Activated CD4-positive, alpha-beta memory T cell treated with anti-CD3 and anti-CD28 coated beads for 36 hours (primary cell): ENCODE measurements at regions of chr5 and their contacts with region 1.

Region 1: GRCh38 chr5:132883261-132883834 is 9.9 kb downstream of the LEAP2 start:
- DNase-seq: peak; percentile 38
- H3K4me3 Mint-ChIP-seq: no peak overlapping the region
- H3K27ac Mint-ChIP-seq: no peak overlapping the region
- H3K4me1 Mint-ChIP-seq: peaks cover 3% of the 10 kb centered on the region
- H3K27me3 Mint-ChIP-seq: no peaks in the 10 kb centered on the region

Region 2: DNA sequence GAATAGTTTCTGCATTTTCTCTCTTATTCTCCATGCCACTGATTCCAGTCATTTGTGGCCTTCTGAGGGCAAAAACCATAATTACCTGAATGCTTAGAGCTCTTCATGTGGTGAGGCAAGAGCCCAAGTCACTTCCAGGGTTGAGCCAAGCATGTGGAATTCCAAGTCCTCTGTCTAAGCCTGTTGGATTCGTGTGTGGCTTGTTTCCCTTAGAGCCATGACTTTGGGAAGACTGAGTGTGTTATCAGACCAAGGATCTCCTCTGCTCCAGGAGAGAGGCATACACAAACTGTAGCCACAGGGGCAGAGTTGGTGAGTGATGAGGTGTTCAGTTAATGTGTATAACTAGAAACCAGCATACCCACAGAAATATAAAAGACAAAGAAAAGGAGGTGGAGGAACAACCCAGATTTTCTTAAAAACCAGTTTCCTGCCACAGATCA is 486.7 kb before region 1 on chr5:
- CTCF ChIA-PET with region 1: no interaction called
- POLR2A ChIA-PET with region 1: no interaction called
- intact Hi-C with region 1: no loop called
- DNase-seq: no peak
- H3K4me3 Mint-ChIP-seq: no peak overlapping the region
- H3K27ac Mint-ChIP-seq: peak overlapping the region; percentile 44
- H3K4me1 Mint-ChIP-seq: peaks cover 80% of the 10 kb centered on the region
- H3K27me3 Mint-ChIP-seq: no peaks in the 10 kb centered on the region

Region 3: DNA sequence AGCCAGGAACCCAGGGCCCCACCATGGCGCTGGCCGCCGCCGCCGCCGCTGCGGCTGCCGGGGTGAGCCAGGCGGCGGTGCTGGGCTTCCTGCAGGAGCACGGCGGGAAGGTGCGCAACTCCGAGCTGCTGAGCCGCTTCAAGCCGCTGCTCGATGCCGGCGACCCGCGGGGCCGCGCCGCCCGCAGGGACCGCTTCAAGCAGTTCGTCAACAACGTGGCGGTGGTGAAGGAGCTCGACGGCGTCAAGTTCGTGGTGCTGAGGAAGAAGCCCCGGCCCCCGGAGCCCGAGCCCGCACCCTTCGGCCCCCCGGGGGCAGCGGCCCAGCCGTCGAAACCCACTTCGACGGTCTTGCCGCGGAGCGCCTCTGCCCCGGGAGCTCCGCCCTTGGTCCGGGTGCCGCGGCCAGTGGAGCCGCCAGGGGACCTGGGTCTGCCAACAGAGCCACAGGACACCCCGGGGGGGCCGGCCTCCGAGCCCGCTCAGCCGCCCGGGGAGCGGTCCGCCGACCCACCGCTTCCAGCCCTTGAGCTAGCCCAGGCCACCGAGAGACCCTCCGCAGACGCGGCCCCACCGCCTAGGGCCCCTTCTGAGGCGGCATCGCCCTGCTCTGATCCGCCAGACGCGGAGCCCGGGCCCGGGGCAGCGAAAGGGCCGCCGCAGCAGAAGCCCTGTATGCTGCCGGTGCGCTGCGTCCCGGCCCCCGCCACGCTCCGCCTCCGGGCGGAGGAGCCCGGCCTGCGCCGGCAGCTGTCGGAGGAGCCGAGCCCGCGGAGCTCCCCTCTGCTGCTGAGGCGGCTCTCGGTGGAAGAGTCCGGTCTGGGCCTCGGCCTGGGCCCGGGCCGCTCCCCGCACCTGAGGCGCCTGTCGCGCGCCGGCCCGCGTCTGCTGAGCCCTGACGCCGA is 69.5 kb before region 1 on chr5:
- CTCF ChIA-PET with region 1: no interaction called
- POLR2A ChIA-PET with region 1: no interaction called
- intact Hi-C with region 1: no loop called
- DNase-seq: peak; percentile 45
- H3K4me3 Mint-ChIP-seq: no peak overlapping the region
- H3K27ac Mint-ChIP-seq: no peak overlapping the region
- H3K4me1 Mint-ChIP-seq: peaks cover 12% of the 10 kb centered on the region
- H3K27me3 Mint-ChIP-seq: peaks cover 31% of the 10 kb centered on the region

Region 4: DNA sequence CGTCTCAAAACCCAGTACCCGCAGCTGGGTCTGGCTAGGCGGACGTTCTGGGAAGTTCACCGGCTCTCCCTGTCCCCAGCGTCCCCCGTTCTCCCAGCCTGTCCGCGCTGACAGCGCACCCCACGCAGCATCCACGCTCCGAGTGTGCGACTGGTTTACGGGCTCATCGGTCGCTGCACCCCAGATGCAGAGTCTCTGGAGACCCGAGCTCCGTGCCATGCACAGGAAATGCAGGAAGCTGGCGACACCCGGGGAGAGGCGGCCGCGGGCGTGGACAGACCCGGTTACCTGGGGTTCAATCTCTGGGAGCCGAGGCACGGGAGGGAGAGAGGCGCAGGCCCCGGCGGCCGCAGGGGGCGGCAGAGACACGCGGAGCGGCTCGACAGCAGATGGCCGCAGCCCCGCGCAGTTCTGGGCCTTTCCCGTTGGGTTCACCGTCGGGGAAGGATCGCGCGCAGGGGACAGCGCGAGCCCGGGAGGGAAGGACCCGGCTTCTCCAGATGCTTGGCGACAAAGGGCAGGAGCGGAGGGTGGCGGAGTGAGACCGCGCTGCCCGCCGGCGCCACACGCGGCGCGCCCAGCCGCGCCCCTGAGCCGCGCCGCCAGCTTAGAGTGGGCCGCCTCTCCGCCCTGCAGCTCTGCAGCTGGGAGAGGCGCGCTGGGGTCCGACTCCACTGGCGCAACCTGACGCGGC is 53.5 kb before region 1 on chr5:
- CTCF ChIA-PET with region 1: interaction called, 17 read pairs
- POLR2A ChIA-PET with region 1: no interaction called
- intact Hi-C with region 1: loop called (anchors 2 kb)
- DNase-seq: peak; percentile 80
- H3K4me3 Mint-ChIP-seq: peak overlapping the region; percentile 83
- H3K27ac Mint-ChIP-seq: no peak overlapping the region
- H3K4me1 Mint-ChIP-seq: no peaks in the 10 kb centered on the region
- H3K27me3 Mint-ChIP-seq: peaks cover 41% of the 10 kb centered on the region